K562 (cell line): ENCODE measurements at regions of chr5 and their contacts with region 1.

Region 1: GRCh38 chr5:113070901-113071300 is 94.3 kb downstream of the DCP2 start:
- DNase-seq: no peak
- ATAC-seq: peak; percentile 5; the same call in 1 of the 3 replicates
- H3K4me3 ChIP-seq: no peak overlapping the region
- H3K27ac ChIP-seq: no peak overlapping the region; the same call in 2 of the 3 replicates
- H3K4me1 ChIP-seq: peaks cover 21 to 23% of the 10 kb centered on the region in 2 experiments; a peak in 4 of 5 replicates
- H3K27me3 ChIP-seq: no peaks in the 10 kb centered on the region
- CTCF ChIP-seq: no peak
- EP300 ChIP-seq: no peak
- POLR2A ChIP-seq: no peak
- RAD21 ChIP-seq: no peak

Region 2: GRCh38 chr5:112995764-112996618 is 74.9 kb before region 1 on chr5:
- CTCF ChIA-PET with region 1: no interaction called
- POLR2A ChIA-PET with region 1: no interaction called
- in situ Hi-C with region 1: no loop called
- intact Hi-C with region 1: loop called (anchors 2 kb)
- DNase-seq: peak; percentile 49 to 81 (median 56)
- ATAC-seq: peak; percentile 91
- H3K4me3 ChIP-seq: no peak overlapping the region
- H3K27ac ChIP-seq: no peak overlapping the region
- H3K4me1 ChIP-seq: no peaks in the 10 kb centered on the region
- H3K27me3 ChIP-seq: no peaks in the 10 kb centered on the region
- CTCF ChIP-seq: peak; percentile 74 to 92 (median 89)
- EP300 ChIP-seq: no peak
- POLR2A ChIP-seq: no peak
- RAD21 ChIP-seq: peak; percentile 85 to 88

Region 3: DNA sequence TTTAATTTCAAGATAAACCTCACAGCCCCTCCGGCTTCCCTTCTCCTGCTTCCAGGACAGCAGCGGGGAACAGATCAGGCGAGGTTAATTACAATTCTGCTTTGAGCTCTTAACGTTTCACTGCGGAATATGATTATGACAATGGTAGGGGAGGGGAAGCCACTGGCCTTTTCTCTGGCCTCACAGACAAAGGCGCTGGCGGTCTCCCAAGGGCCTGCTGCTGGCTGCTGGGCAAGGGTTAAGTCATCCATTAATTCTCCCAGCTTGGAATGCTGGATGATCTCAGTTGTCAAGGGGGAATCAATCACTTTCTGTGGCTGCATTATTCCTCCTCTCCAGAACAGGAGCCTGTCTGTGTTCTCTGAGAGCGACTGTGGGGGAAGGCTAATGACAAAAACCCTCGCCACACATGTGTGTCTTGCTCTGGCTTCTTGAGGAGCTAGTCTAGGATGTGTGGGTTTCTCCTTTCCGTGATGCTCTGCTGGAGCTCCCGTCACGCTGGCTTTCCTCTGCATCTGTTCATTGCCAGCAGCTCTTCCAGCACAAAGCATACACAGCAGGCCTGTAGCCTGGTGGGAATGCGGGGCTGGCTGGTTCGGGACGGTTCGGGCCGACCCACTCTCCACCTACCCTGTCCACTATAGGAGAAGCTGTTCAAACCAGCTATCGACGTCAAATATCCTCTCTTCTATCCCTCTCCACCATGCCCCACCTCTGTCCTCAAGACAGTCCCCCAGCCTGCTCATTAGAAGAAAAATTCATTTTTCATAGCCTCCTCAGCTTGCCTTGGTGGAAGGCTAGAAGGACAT is 11.5 kb before region 1 on chr5:
- CTCF ChIA-PET with region 1: no interaction called
- POLR2A ChIA-PET with region 1: interaction called, 15 read pairs
- in situ Hi-C with region 1: no loop called
- intact Hi-C with region 1: no loop called
- DNase-seq: no peak
- ATAC-seq: no peak
- H3K4me3 ChIP-seq: no peak overlapping the region
- H3K27ac ChIP-seq: no peak overlapping the region
- H3K4me1 ChIP-seq: no peaks in the 10 kb centered on the region
- H3K27me3 ChIP-seq: peaks cover 5 to 24% of the 10 kb centered on the region in 2 experiments; a peak in 4 of 5 replicates
- CTCF ChIP-seq: no peak
- EP300 ChIP-seq: no peak
- POLR2A ChIP-seq: no peak
- RAD21 ChIP-seq: no peak

Region 4: DNA sequence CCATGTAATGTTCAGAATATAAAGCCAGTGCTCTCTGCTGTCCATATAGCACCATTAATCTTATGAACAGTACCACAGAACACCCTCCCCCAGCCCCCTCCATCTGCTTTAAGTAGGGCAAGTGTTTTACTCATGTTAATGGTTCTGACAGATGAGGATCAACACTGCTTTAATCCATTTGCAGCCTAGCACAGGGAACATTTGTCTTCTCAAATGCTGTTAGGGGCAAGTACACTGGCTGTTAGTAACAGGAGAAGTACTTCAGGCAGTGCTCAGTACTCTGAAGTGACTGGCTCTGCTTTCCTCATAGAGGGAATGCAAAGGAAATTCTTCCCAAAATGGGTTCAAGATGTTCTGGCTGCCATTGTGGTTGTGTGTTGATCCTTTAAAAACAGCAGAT is 108.3 kb after region 1 on chr5:
- CTCF ChIA-PET with region 1: no interaction called
- POLR2A ChIA-PET with region 1: no interaction called
- in situ Hi-C with region 1: no loop called
- intact Hi-C with region 1: no loop called
- DNase-seq: no peak
- ATAC-seq: no peak
- H3K4me3 ChIP-seq: no peak overlapping the region
- H3K27ac ChIP-seq: no peak overlapping the region
- H3K4me1 ChIP-seq: no peaks in the 10 kb centered on the region
- H3K27me3 ChIP-seq: peaks cover 2 to 10% of the 10 kb centered on the region in 2 experiments; a peak in 3 of 5 replicates
- CTCF ChIP-seq: no peak
- EP300 ChIP-seq: no peak
- POLR2A ChIP-seq: no peak
- RAD21 ChIP-seq: no peak